ENCODE measurements at regions of chr14 and their contacts with region 1.

Region 1: GRCh38 chr14:105212541-105213300 is 31.6 kb upstream of the NUDT14 start:
- DNase-seq: no peak
- ATAC-seq: no peak

Region 2: DNA sequence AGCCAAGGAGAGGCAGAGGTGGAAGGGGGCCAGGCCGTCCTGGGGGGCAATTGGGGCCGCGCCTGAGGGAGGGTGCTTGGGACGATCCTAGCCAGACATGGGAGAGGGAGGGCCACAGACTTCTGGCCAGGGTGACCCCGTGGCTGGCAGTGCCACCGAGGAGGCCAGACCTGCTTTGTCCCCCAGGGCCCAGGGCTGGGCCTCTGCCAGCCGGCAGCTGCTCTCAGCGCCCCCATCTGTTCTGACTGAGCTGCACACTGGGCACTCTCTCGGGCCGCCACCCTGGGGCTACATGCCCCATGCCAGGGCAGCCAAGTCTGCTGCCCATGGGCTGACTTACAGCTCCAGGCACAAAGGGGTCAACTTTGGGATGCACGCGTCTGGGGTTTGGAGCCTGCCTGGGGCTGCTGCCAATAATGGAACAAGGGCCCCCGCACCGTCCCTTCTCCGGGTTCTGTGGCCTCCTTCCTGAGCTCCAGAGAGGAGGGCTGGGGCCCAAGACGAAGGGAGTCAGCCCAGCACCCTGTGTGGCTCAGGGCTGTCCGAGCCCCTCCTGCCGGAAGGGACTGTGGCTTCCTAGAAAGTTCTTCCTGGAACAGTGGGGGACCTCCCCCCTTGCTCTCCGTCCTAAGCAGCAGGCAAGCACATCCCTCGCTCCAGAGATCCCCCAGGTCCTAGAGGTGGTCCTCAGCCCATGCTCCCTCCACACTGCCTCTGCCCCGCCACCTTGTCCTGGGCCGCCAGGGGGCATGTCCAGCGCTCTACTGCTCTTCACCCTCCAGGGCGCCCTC is 487.5 kb before region 1 on chr14:
- intact Hi-C with region 1: no loop called
- DNase-seq: peak in 1 of 2 donors; percentile 39
- ATAC-seq: peak; percentile 15

Region 3: GRCh38 chr14:105267820-105268548 is 55.3 kb after region 1 on chr14:
- intact Hi-C with region 1: loop called in 1 of 2 experiments (anchors 10 kb)
- DNase-seq: peak in 1 of 2 donors; percentile 38
- ATAC-seq: peak; percentile 91